K562 (cell line): ENCODE measurements at regions of chr22 and their contacts with region 1.

Region 1: GRCh38 chr22:22673628-22674027 is 29.2 kb downstream of the GGTLC2 start:
- DNase-seq: no peak
- ATAC-seq: peak; percentile 23
- H3K4me3 ChIP-seq: no peak overlapping the region
- H3K27ac ChIP-seq: no peak overlapping the region
- H3K4me1 ChIP-seq: no peaks in the 10 kb centered on the region
- H3K27me3 ChIP-seq: peaks cover 33 to 41% of the 10 kb centered on the region in 2 experiments
- CTCF ChIP-seq: no peak
- EP300 ChIP-seq: no peak
- POLR2A ChIP-seq: no peak
- RAD21 ChIP-seq: no peak

Region 2: DNA sequence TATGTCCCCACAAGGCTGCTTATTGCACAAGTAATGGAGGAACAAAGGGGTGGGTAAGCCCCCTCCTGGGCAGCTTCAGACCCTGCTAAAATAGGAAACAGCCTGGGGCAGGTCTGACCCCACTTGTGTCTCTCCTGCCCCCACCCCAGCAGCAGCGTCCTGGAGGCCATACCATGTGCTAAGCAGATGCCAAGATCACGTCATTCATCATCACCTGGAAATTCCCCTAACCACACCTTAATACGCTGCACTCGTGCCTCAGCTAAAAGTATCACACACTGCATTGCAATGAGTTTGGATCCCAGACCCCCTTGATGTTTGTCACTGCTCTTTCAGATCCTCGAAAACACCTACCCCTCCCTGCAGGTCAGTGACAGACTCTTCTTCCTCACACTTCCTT is 57.0 kb before region 1 on chr22:
- CTCF ChIA-PET with region 1: no interaction called
- POLR2A ChIA-PET with region 1: no interaction called
- in situ Hi-C with region 1: no loop called
- intact Hi-C with region 1: no loop called
- DNase-seq: peak in 1 of 4 experiments; percentile 40
- ATAC-seq: peak; percentile 1
- H3K4me3 ChIP-seq: no peak overlapping the region
- H3K27ac ChIP-seq: no peak overlapping the region
- H3K4me1 ChIP-seq: no peaks in the 10 kb centered on the region
- H3K27me3 ChIP-seq: peaks cover 52 to 64% of the 10 kb centered on the region in 2 experiments
- CTCF ChIP-seq: no peak
- EP300 ChIP-seq: no peak
- POLR2A ChIP-seq: no peak
- RAD21 ChIP-seq: no peak

Region 3: DNA sequence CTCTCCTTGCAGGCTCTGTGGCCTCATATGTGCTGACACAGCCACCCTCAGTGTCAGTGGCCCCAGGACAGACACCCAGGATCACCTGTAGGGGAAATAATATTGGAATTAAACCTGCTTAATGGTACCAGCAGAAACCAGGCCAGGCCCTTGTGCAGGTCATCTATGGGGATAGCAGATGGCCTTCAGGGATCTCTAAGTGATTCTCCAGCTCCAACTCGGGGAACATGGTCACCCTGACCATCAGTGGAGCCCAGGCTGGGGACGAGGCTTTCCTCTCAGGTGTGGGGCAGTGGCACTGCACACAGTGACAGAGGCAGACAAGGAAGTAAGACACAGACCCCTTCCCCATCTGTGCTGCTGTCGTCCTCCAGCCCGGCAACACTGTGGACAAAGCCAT is 12.4 kb before region 1 on chr22:
- CTCF ChIA-PET with region 1: interaction called, 3 read pairs
- POLR2A ChIA-PET with region 1: interaction called, 39 read pairs
- in situ Hi-C with region 1: no loop called
- intact Hi-C with region 1: no loop called
- DNase-seq: no peak
- ATAC-seq: no peak; the same call in 2 of the 3 replicates
- H3K4me3 ChIP-seq: no peak overlapping the region
- H3K27ac ChIP-seq: no peak overlapping the region
- H3K4me1 ChIP-seq: peaks cover 0 to 3% of the 10 kb centered on the region in 2 experiments; a peak in 1 of 5 replicates
- H3K27me3 ChIP-seq: peaks cover 32 to 57% of the 10 kb centered on the region in 2 experiments
- CTCF ChIP-seq: no peak
- EP300 ChIP-seq: no peak
- POLR2A ChIP-seq: no peak
- RAD21 ChIP-seq: no peak

Region 4: DNA sequence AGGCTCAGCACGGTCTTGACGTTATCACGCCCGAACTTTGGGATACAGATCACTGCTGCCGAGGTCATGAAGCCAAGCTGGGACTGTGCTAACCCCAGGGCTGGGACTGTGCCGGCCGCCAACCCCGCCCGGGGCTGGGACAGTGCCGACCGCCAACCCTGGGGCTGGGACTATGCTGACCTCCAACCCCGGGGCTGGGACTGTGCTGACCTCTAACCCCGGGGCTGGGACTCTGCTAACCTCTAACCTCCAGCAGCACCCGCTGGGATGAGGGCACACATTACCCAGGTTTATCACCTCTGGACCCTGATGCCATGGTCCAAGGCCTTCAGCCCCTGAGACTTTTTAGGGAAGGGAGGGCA is 776.8 kb after region 1 on chr22:
- CTCF ChIA-PET with region 1: no interaction called
- POLR2A ChIA-PET with region 1: no interaction called
- in situ Hi-C with region 1: no loop called
- intact Hi-C with region 1: no loop called
- DNase-seq: no peak
- ATAC-seq: no peak
- H3K4me3 ChIP-seq: no peak overlapping the region
- H3K27ac ChIP-seq: no peak overlapping the region
- H3K4me1 ChIP-seq: no peaks in the 10 kb centered on the region; a peak in 1 of 5 replicates
- H3K27me3 ChIP-seq: no peaks in the 10 kb centered on the region
- CTCF ChIP-seq: no peak
- EP300 ChIP-seq: no peak
- POLR2A ChIP-seq: no peak
- RAD21 ChIP-seq: no peak